Psoas muscle (tissue), 8 donors: ENCODE measurements at regions of chr1 and their contacts with region 1.

Region 1: GRCh38 chr1:211133836-211134669 is at the start of gene KCNH1:
- DNase-seq: peak; percentile 80 to 87
- ATAC-seq: peak; percentile 84 to 96 (median 96)
- H3K4me3 ChIP-seq: peak within 1 kb of the TSS; percentile 60
- H3K27ac ChIP-seq: no peak within 1 kb of the TSS
- H3K4me1 ChIP-seq: peaks cover 8% of the 10 kb centered on the region
- H3K27me3 ChIP-seq: peaks cover 0 to 60% (median 7%) of the 10 kb centered on the region in 3 donors
- CTCF ChIP-seq: peak; percentile 76
- total RNA-seq, gene KCNH1: 0.10 to 0.22 (median 0.21) TPM

Region 2: DNA sequence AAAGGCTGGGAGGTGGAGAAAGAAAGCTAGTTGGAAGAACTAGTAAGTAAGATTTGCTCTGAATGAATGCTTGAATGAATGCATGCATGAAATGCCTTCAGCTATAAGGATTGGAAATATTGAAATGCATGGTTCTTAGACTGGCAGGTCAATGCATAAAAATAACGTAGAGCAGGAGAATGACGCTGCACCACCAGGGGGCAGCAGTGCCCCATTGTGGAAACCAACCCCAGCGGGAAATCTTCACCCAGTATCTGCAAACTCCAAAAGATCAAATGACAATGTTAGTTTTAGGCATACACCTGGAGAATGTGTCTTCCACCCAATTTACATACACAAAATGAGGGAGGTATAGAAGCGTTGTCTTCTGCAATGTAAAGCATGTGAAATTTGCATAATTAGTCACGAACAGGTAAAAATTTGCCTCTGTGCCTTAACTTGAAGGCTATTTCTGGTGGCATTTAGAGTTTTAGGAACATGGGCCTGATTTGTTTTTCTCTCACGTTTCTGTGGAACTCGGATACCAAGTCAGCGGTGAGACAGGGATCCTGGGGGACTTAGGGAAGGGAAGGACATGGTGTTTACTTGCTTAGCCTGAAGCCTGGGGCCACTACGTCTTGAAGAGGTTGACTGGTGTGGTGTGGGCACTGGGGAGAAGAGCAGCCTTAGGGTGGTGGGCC is 726.7 kb before region 1 on chr1:
- intact Hi-C with region 1: loop called (anchors 2 to 5 kb)
- DNase-seq: peak; percentile 60 to 74
- ATAC-seq: peak in 3 of 4 donors; percentile 46 to 64 (median 58)
- H3K4me3 ChIP-seq: no peak overlapping the region
- H3K27ac ChIP-seq: no peak overlapping the region
- H3K4me1 ChIP-seq: no peaks in the 10 kb centered on the region
- H3K27me3 ChIP-seq: no peaks in the 10 kb centered on the region
- CTCF ChIP-seq: peak; percentile 95

Region 3: GRCh38 chr1:210448297-210448892 is 685.7 kb before region 1 on chr1:
- intact Hi-C with region 1: loop called in 1 of 2 experiments (anchors 5 kb)
- DNase-seq: no peak
- ATAC-seq: no peak
- H3K4me3 ChIP-seq: no peak overlapping the region
- H3K27ac ChIP-seq: no peak overlapping the region
- H3K4me1 ChIP-seq: no peaks in the 10 kb centered on the region
- H3K27me3 ChIP-seq: peaks cover 0 to 3% (median 0%) of the 10 kb centered on the region in 3 donors
- CTCF ChIP-seq: peak; percentile 48

Region 4: DNA sequence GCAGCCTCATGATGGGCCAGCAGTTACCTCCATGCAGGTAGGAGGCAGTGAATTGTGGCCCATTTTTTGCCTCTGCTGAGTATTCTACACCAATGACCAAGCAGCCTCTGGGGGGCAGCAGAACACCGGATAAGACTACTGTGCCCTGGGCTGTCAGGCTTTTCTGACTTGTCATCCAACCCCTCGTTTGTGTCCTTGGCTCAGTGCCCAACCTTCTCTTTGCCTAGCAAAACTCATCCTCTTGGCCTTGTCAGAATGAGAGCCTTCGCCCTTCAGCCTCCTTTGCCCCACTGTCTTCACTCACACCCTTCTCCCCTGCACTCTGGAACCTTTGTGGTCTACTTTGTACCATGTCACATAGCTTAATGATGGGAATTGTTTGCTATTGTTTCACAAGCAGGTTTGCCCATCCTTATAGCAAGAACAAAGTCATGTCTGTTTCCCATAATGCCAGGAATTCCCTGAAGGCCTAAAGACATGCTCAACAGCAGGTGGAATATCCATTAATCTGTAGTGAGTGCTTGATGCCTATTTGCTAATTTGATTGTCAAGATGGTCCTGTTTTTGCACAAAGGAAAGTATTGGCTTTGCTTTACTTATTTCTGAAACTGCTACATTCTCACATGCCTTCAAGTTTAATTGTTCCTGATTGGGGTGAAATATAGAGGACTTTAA is 549.5 kb before region 1 on chr1:
- intact Hi-C with region 1: loop called (anchors 2 to 5 kb)
- DNase-seq: peak; percentile 71 to 86
- ATAC-seq: peak; percentile 43 to 89 (median 70)
- H3K4me3 ChIP-seq: no peak overlapping the region
- H3K27ac ChIP-seq: no peak overlapping the region
- H3K4me1 ChIP-seq: no peaks in the 10 kb centered on the region
- H3K27me3 ChIP-seq: no peaks in the 10 kb centered on the region
- CTCF ChIP-seq: peak; percentile 43